Activated CD4-positive, alpha-beta memory T cell treated with anti-CD3 and anti-CD28 coated beads for 36 hours (primary cell): ENCODE measurements at regions of chr11 and their contacts with region 1.

Region 1: GRCh38 chr11:1262172-1263006 is 39.5 kb downstream of the MUC5B start:
- DNase-seq: peak; percentile 94
- H3K4me3 Mint-ChIP-seq: peak overlapping the region; percentile 81
- H3K27ac Mint-ChIP-seq: peak overlapping the region; percentile 89
- H3K4me1 Mint-ChIP-seq: peaks cover 17% of the 10 kb centered on the region
- H3K27me3 Mint-ChIP-seq: no peaks in the 10 kb centered on the region

Region 2: GRCh38 chr11:1309498-1310317 is 47.3 kb after region 1 on chr11 and contains the start of gene TOLLIP:
- CTCF ChIA-PET with region 1: interaction called, 3 read pairs
- POLR2A ChIA-PET with region 1: interaction called, 7 read pairs
- intact Hi-C with region 1: loop called (anchors 1 kb)
- DNase-seq: peak; percentile 97
- H3K4me3 Mint-ChIP-seq: peak within 1 kb of the TSS; percentile 76
- H3K27ac Mint-ChIP-seq: peak within 1 kb of the TSS; percentile 87
- H3K4me1 Mint-ChIP-seq: peaks cover 37% of the 10 kb centered on the region
- H3K27me3 Mint-ChIP-seq: no peaks in the 10 kb centered on the region
- total RNA-seq, gene TOLLIP: 30.0 to 32.1 TPM

Region 3: DNA sequence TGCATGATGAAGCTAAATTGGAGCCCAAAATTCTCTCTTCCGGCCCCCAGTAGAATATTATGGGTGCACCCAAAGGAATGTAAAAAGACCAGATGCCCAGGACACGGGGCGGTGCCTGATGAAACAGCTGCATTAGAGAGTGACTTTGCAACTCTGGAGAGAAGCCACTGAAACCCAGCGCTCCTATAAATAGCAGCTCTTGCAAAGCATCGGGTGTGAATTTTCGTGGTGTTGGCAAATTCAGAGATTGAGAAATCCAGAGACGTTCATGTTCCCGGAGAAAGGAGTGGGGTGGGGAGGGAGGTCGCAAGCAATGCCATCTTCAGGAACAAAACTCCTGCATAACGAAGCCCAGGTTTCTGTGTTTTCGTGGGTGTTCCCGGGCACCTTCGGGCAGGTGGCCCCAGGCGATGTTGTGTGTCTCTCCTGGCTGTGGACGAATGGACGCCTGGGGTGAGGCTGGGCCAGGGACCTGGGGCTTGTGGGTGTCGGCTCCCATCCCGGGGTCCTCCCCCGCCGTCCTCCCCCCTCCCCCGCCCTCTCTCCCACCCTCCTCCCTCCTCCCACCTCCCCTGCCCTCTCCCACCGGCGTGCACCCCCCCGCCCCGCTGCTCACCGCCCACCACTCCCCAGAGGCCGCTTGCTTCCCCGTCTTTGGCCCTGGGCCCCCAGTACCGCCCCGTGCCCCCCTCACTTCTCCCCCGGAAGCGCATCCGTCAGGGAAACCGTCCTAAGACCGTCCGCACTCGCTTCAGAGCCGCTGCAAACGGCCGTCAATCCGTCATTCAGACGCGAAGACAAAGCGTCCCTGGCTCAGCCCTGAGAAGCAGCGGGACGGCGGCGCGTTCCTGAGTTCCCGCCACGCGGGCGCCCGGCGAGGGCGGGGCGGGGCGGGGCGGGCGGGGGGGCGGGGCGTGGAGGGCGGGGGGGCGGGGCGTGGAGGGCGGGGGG is 73.7 kb after region 1 on chr11:
- CTCF ChIA-PET with region 1: no interaction called
- POLR2A ChIA-PET with region 1: interaction called, 4 read pairs
- intact Hi-C with region 1: loop called (anchors 2 kb)
- DNase-seq: peak; percentile 69
- H3K4me3 Mint-ChIP-seq: peak overlapping the region; percentile 71
- H3K27ac Mint-ChIP-seq: peak overlapping the region; percentile 66
- H3K4me1 Mint-ChIP-seq: peaks cover 9% of the 10 kb centered on the region
- H3K27me3 Mint-ChIP-seq: peaks cover 2% of the 10 kb centered on the region

Region 4: DNA sequence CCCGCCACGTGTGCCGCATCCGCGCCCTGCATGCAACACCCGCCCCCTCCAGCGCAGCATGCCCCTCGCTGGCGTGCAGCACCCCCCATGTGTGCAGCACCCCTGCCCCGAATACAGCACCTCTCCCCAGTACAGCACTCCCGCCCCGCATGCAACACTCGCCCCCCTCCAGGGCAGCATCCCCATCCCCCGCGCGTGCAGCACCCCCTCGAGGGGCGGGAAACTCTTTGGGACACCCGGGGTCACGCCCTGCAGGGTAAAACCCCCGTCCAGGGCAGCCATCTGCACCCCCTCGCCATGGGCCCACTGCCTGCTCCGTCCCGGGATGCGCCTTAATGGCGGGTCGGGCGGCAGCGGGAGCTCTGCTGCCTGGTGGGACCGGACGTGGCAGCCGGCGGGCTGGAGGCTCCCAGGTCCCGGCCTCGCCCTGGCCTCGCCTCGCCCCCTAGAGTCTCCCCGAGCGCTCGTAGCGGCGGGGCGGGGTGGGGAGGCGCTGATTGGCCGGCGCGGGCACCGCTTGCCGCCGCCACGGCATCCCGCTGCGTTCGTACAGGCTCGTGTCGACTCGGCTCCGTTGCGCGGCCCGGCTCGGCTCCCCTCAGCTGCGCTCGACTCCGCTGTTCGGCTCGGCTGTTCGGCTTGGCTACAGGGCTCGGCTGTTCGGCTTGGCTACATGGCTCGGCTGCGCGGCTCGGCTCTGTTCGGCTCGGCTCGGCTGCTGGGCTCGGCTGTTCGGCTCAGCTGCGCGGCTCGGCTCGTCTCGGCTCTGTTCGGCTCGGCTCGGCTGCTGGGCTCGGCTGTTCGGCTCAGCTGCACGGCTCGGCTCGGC is 126.9 kb after region 1 on chr11:
- CTCF ChIA-PET with region 1: interaction called, 4 read pairs
- POLR2A ChIA-PET with region 1: no interaction called
- intact Hi-C with region 1: loop called (anchors 2 kb)
- DNase-seq: peak; percentile 97
- H3K4me3 Mint-ChIP-seq: peak overlapping the region; percentile 61
- H3K27ac Mint-ChIP-seq: no peak overlapping the region
- H3K4me1 Mint-ChIP-seq: peaks cover 6% of the 10 kb centered on the region
- H3K27me3 Mint-ChIP-seq: peaks cover 26% of the 10 kb centered on the region